Activated CD4-positive, alpha-beta T cell treated with anti-CD3 and anti-CD28 coated beads for 36 hours (primary cell): ENCODE measurements at regions of chr7 and their contacts with region 1.

Region 1: GRCh38 chr7:105046414-105046813 is 32.4 kb downstream of the KMT2E start:
- DNase-seq: no peak
- ATAC-seq: no peak
- H3K4me3 Mint-ChIP-seq: no peak overlapping the region
- H3K27ac Mint-ChIP-seq: no peak overlapping the region
- H3K4me1 Mint-ChIP-seq: peaks cover 45% of the 10 kb centered on the region
- H3K27me3 Mint-ChIP-seq: no peaks in the 10 kb centered on the region

Region 2: GRCh38 chr7:105024743-105025142 is 21.7 kb before region 1 on chr7:
- CTCF ChIA-PET with region 1: interaction called, 10 read pairs
- POLR2A ChIA-PET with region 1: interaction called, 4 read pairs
- intact Hi-C with region 1: no loop called
- DNase-seq: no peak
- ATAC-seq: peak; percentile 17
- H3K4me3 Mint-ChIP-seq: no peak overlapping the region
- H3K27ac Mint-ChIP-seq: peak overlapping the region; percentile 60
- H3K4me1 Mint-ChIP-seq: peaks cover 91% of the 10 kb centered on the region
- H3K27me3 Mint-ChIP-seq: no peaks in the 10 kb centered on the region

Region 3: GRCh38 chr7:105060437-105060836 is 14.0 kb after region 1 on chr7:
- CTCF ChIA-PET with region 1: interaction called, 10 read pairs
- POLR2A ChIA-PET with region 1: no interaction called
- intact Hi-C with region 1: no loop called
- DNase-seq: no peak
- ATAC-seq: no peak
- H3K4me3 Mint-ChIP-seq: no peak overlapping the region
- H3K27ac Mint-ChIP-seq: no peak overlapping the region
- H3K4me1 Mint-ChIP-seq: peaks cover 56% of the 10 kb centered on the region
- H3K27me3 Mint-ChIP-seq: no peaks in the 10 kb centered on the region

Region 4: GRCh38 chr7:105830391-105831301 is 784.2 kb after region 1 on chr7:
- CTCF ChIA-PET with region 1: no interaction called
- POLR2A ChIA-PET with region 1: no interaction called
- intact Hi-C with region 1: no loop called
- DNase-seq: no peak
- ATAC-seq: no peak
- H3K4me3 Mint-ChIP-seq: no peak overlapping the region
- H3K27ac Mint-ChIP-seq: no peak overlapping the region
- H3K4me1 Mint-ChIP-seq: peaks cover 14% of the 10 kb centered on the region
- H3K27me3 Mint-ChIP-seq: no peaks in the 10 kb centered on the region